H1 (cell line): ENCODE measurements at regions of chr2 and their contacts with region 1.

Region 1: GRCh38 chr2:147331790-147332419 is 512.9 kb upstream of the ACVR2A start:
- DNase-seq: peak in 1 of 2 experiments; percentile 55
- H3K4me3 ChIP-seq: no peak overlapping the region
- H3K27ac ChIP-seq: no peak overlapping the region
- H3K4me1 ChIP-seq: no peaks in the 10 kb centered on the region
- H3K27me3 ChIP-seq: no peaks in the 10 kb centered on the region
- CTCF ChIP-seq: peak in 2 of 3 experiments; percentile 48 to 53; a peak in 3 of 4 replicates
- EP300 ChIP-seq: no peak
- POLR2A ChIP-seq: no peak
- RAD21 ChIP-seq: peak; percentile 79 to 83

Region 2: DNA sequence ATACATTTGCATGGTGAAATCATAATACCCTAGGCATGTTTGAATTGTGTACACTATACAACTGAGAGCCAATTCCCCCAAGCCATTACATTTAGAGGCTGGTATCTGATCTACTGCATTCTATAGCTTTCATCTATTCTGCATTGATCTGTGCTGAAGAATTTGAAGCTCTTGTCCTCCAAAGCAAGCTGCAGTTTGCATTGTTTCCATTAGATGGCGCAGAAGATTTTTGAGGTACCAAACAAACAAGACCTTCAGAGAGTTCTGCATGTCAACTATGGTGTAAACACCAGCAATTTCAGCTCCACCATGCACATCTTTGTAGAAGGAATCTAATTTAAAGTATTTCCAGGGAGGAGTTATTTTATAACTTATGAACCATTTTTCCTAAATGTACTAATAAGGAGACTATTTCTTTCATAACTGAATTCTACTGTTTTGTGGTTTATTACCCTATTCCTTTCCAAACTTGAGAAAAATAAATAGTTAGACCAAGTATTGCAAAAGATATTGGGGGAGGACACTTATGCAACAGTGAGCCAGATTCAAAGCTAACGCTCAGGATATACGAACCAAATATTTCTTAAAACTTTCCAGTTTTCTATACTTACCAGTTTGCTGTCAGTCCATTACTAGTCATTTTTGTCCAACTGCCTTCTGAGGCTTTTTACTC is 248.9 kb before region 1 on chr2:
- CTCF ChIA-PET with region 1: interaction called, 20 read pairs
- POLR2A ChIA-PET with region 1: no interaction called
- DNase-seq: peak; percentile 53 to 82
- H3K4me3 ChIP-seq: no peak overlapping the region
- H3K27ac ChIP-seq: no peak overlapping the region
- H3K4me1 ChIP-seq: no peaks in the 10 kb centered on the region
- H3K27me3 ChIP-seq: no peaks in the 10 kb centered on the region
- CTCF ChIP-seq: peak in 2 of 3 experiments; percentile 77 to 93; a peak in 3 of 4 replicates
- EP300 ChIP-seq: no peak
- POLR2A ChIP-seq: no peak
- RAD21 ChIP-seq: peak; percentile 80 to 87

Region 3: GRCh38 chr2:147342329-147342728 is 10.4 kb after region 1 on chr2:
- CTCF ChIA-PET with region 1: interaction called, 17 read pairs
- POLR2A ChIA-PET with region 1: no interaction called
- DNase-seq: no peak
- H3K4me3 ChIP-seq: no peak overlapping the region
- H3K27ac ChIP-seq: no peak overlapping the region
- H3K4me1 ChIP-seq: no peaks in the 10 kb centered on the region; a peak in 1 of 7 replicates
- H3K27me3 ChIP-seq: no peaks in the 10 kb centered on the region
- CTCF ChIP-seq: no peak
- EP300 ChIP-seq: no peak
- POLR2A ChIP-seq: no peak
- RAD21 ChIP-seq: no peak

Region 4: DNA sequence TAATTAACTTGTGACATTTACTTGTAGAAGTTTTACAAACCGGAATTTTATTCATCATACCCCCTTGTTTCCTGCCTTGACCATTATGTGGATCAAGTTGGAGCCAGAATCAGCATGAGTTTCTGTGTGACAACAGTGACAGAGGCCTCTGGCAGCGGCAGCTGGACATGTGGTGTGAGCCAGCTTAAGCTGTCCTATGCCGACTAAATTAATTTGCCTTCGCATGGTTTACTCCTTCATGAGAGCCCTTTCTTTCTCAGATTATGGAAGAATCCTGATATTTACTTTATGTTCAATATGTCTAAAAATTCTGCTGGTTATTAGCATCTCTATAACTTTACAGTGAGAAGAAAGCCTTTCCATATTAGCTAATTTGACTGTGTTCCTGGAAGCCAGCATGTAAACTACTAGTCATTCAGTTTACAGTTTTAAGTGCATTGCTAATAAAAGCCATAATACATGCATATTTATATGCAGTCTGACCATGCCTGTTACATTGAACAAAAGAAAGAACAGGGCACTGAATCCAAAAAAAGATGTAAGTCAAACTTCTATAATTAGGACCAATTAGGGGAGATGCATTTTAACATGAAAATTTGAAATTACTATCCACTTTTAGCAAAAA is 17.1 kb after region 1 on chr2:
- CTCF ChIA-PET with region 1: interaction called, 17 read pairs
- POLR2A ChIA-PET with region 1: no interaction called
- DNase-seq: no peak
- H3K4me3 ChIP-seq: no peak overlapping the region
- H3K27ac ChIP-seq: no peak overlapping the region
- H3K4me1 ChIP-seq: peaks cover 0 to 2% (median 0%) of the 10 kb centered on the region in 4 experiments; a peak in 2 of 7 replicates
- H3K27me3 ChIP-seq: no peaks in the 10 kb centered on the region
- CTCF ChIP-seq: no peak
- EP300 ChIP-seq: no peak
- POLR2A ChIP-seq: no peak
- RAD21 ChIP-seq: no peak